ENCODE measurements at regions of chr7 and their contacts with region 1.

Region 1: GRCh38 chr7:33459340-33459751 is 330.0 kb downstream of the BBS9 start:
- DNase-seq: peak; percentile 14
- H3K4me3 ChIP-seq: no peak overlapping the region
- H3K27me3 ChIP-seq: no peaks in the 10 kb centered on the region
- CTCF ChIP-seq: peak; percentile 75

Region 2: DNA sequence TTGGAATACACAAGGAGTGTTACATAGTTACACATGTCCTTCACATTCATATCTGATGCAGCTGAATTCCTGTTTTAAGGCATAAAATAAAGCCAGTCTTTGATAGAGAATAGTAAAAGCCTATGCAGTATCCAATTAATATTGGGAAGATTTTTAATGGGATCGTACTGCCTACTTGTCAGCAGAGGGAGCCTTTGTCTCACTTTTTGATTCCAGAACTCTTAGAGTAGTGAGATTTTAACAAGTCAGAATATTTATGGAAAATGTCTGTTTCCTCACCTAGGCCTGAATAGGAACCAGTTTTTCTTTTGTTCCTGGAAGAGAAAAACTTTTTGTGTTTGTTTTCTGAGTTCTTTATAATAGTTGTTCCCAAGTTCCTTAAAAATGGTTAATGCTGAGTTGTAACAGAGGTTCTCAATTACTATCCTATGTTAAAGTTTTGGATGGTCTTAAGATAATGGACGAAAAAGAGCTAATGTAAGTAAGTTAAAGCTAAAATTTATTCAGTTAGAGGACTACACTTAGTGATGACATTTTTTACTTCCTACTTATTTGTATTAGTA is 215.9 kb before region 1 on chr7:
- CTCF ChIA-PET with region 1: interaction called, 11 read pairs
- POLR2A ChIA-PET with region 1: no interaction called
- DNase-seq: no peak
- H3K4me3 ChIP-seq: no peak overlapping the region
- H3K27me3 ChIP-seq: no peaks in the 10 kb centered on the region
- CTCF ChIP-seq: peak; percentile 66

Region 3: DNA sequence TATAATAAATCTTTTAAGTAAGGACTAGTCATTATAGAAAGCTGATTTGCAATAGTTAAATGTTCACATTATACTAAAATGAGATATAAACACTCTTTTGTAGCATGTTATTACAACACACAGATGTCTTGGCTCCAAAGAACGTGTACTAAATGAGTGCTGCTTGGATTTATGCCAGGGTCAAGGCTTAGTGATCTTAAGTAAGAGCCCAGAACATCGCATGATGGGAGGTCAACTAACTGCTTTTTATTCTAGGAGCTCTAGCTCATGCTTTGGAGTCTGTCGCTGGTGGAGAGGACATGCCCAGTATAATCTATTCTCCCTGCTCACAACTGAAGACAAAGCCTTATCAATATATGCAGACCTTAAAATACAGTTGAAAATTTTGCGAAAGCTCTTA is 14.8 kb before region 1 on chr7:
- CTCF ChIA-PET with region 1: interaction called, 11 read pairs
- POLR2A ChIA-PET with region 1: no interaction called
- DNase-seq: no peak
- H3K4me3 ChIP-seq: no peak overlapping the region
- H3K27me3 ChIP-seq: no peaks in the 10 kb centered on the region
- CTCF ChIP-seq: no peak

Region 4: GRCh38 chr7:33471636-33472242 is 12.4 kb after region 1 on chr7:
- CTCF ChIA-PET with region 1: interaction called, 20 read pairs
- POLR2A ChIA-PET with region 1: no interaction called
- DNase-seq: no peak
- H3K4me3 ChIP-seq: no peak overlapping the region
- H3K27me3 ChIP-seq: no peaks in the 10 kb centered on the region
- CTCF ChIP-seq: no peak

Measured in BJ (cell line).